ENCODE measurements at regions of chr17 and their contacts with region 1.

Region 1: DNA sequence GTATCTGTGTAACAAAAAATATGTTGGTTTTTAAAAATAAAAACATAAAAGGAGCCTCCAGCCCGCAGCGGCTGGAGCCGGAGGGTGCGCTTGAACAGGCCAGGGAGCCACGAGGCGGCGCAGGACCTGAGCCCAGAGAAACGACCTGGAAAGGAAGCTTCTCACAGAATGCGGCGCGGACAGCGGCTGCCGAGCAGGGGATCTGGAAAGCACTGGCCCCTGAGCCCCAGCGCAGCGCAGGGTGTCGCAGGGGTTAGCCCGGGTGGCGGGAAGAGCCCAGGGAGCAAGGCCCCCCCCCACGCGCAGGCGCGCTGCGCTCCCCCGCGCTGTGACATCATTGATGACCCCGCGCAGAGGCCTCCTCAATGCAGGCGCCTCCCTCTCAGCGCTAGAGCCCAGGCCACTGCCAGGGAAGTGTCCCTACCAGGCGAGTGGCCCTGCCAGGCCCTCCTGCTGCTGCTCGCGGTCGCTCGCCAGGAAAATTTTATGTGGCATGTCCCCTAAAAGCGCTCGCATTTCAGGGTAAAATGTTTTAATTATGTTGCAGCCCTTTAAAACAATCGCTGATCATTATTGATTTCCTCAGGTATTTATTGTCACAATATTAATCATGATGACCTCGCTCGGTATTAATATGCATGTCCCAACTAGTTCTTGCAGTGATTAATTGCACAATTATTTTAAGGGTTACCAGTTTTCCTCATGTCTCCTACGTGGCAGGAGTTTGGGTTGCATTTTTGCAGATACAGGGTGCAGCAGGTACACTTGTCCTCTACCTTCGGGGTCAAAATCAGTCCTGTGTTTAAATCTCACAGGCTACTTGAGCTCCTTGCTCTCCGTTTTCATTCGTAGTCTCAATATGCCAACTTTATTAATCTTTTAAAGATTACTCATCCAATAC is 134.2 kb downstream of the USP22 start:
- DNase-seq: peak; percentile 94
- H3K4me3 ChIP-seq: peak overlapping the region; percentile 29 to 54 (median 48)
- H3K27ac ChIP-seq: peak overlapping the region; percentile 86 to 89 (median 88)
- H3K4me1 ChIP-seq: peaks cover 0 to 19% (median 13%) of the 10 kb centered on the region in 4 donors
- H3K27me3 ChIP-seq: no peaks in the 10 kb centered on the region
- CTCF ChIP-seq: peak in 3 of 4 experiments; percentile 57 to 76 (median 68)
- EP300 ChIP-seq: no peak
- POLR2A ChIP-seq: no peak

Region 2: DNA sequence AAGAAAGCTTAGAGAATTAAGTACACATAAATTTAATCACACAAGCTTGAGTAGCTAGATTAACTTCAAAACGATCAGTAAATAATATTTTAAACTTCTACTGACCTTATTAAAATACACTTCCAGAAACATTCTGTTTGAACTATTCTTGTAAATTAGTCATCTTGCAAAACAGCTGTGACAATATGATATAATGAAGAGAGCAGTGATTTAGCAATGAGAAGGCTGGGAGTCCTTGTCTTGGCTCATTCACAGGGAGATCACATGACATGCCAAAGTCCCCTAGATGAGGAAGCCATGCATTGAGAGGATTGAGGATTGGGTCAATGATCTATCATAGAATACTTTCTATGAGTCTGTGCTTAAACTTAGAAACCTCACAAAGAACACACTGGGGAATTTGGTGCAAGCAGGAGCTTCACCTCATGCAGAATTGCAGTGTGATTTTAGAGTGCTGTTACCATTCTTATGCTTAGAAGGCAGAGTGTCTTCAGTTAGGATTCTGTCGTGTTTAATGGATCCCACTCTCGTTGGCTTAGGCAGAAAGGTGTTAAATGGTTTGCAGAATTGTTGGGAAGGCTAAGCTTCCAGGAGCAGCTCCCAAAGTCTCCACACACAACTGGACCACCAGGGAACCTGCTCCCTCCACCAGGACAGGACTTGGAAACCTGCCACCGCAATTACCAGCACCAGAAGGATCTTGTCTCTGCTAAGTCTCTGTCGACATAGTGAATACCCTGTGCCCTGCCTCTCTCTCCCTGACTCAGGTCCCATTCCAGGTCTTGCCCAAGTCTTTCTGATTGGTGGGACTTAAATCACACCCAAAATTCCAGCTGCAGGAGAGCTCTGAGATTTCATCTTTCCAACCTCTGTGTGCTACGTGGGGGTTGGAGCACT is 47.1 kb after region 1 on chr17:
- intact Hi-C with region 1: loop called (anchors 10 kb)
- DNase-seq: peak; percentile 81
- H3K4me3 ChIP-seq: no peak overlapping the region
- H3K27ac ChIP-seq: peak overlapping the region; percentile 13 to 59 (median 32)
- H3K4me1 ChIP-seq: peaks cover 0 to 17% (median 17%) of the 10 kb centered on the region in 4 donors
- H3K27me3 ChIP-seq: no peaks in the 10 kb centered on the region
- CTCF ChIP-seq: no peak
- EP300 ChIP-seq: no peak
- POLR2A ChIP-seq: no peak

Region 3: GRCh38 chr17:20992987-20993862 is 84.6 kb after region 1 on chr17:
- intact Hi-C with region 1: loop called (anchors 2 kb)
- DNase-seq: peak; percentile 84
- H3K4me3 ChIP-seq: peak overlapping the region in 3 of 4 donors; percentile 32 to 37 (median 34)
- H3K27ac ChIP-seq: peak overlapping the region in 3 of 4 donors; percentile 43 to 58 (median 57)
- H3K4me1 ChIP-seq: peaks cover 0 to 36% (median 21%) of the 10 kb centered on the region in 4 donors
- H3K27me3 ChIP-seq: no peaks in the 10 kb centered on the region
- CTCF ChIP-seq: peak; percentile 72 to 94 (median 89)
- EP300 ChIP-seq: no peak
- POLR2A ChIP-seq: no peak

Region 4: DNA sequence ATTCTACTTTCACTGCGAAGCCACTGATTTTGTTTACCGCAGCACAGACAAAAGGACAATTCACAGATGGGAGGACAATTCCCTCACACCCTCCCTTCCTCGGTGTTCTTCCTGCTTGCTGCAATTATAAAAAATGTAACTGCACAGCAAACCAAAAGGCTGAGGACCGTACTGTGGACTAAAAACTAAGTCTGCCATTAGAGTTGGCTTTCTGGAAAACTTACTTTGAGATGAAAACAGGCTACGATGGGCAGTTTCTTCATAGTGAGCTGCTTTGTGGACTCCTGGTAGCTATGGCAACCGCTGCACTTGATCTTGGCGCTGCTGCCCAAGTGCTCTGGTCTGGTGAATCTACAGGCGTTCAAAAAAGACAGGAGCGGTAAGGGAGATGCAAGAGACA is 99.0 kb after region 1 on chr17:
- intact Hi-C with region 1: no loop called
- DNase-seq: no peak
- H3K4me3 ChIP-seq: no peak overlapping the region
- H3K27ac ChIP-seq: peak overlapping the region in 1 of 4 donors; percentile 30
- H3K4me1 ChIP-seq: peaks cover 0 to 27% (median 6%) of the 10 kb centered on the region in 4 donors
- H3K27me3 ChIP-seq: no peaks in the 10 kb centered on the region
- CTCF ChIP-seq: no peak
- EP300 ChIP-seq: no peak
- POLR2A ChIP-seq: no peak

Measured in sigmoid colon (tissue), 7 donors.